HEK293T (cell line): ENCODE measurements at regions of chr1 and their contacts with region 1.

Region 1: DNA sequence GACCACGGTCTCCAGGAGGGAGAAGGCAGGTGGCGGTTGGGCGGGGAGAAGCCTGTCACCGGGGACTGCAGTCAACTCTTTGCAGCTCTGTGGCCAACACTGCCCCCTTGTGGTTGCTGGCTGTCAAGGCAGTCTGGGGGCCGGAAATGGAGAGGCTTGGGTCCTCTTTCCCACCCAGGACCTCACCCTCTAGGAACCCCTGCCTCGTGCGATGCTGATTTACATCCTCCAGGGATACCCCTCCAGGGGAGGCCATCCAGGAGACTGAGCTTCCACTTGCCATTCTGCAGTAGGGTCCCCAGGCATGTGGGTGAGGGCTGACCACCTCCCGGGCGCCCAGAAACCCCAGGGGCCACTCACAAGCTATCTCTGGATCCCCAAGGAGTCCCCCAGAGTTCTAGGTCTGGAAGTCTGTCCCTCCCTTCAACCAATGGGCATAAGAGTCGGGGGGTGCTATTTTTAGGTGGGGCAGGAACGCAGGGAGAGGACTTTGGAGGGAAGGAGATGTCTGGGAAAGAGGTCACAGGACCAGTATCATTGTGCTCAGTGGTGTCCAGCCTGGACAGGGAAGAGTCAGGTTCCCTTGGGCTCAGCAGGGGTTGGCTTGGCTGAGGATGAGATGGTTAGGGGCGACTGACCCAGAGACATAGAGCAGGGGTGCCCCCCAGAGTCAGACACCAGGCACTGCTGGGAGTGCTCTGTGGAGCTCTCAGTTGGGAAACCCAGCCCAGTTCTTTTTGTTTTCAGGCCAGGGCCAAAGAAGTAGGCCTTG is 7.1 kb upstream of the GPR61 start:
- DNase-seq: peak; percentile 95

Region 2: GRCh38 chr1:109493805-109494539 is 38.6 kb before region 1 on chr1 and contains the start of gene CYB561D1:
- CTCF ChIA-PET with region 1: interaction called, 115 read pairs
- POLR2A ChIA-PET with region 1: interaction called, 13 read pairs
- DNase-seq: peak; percentile 97

Region 3: DNA sequence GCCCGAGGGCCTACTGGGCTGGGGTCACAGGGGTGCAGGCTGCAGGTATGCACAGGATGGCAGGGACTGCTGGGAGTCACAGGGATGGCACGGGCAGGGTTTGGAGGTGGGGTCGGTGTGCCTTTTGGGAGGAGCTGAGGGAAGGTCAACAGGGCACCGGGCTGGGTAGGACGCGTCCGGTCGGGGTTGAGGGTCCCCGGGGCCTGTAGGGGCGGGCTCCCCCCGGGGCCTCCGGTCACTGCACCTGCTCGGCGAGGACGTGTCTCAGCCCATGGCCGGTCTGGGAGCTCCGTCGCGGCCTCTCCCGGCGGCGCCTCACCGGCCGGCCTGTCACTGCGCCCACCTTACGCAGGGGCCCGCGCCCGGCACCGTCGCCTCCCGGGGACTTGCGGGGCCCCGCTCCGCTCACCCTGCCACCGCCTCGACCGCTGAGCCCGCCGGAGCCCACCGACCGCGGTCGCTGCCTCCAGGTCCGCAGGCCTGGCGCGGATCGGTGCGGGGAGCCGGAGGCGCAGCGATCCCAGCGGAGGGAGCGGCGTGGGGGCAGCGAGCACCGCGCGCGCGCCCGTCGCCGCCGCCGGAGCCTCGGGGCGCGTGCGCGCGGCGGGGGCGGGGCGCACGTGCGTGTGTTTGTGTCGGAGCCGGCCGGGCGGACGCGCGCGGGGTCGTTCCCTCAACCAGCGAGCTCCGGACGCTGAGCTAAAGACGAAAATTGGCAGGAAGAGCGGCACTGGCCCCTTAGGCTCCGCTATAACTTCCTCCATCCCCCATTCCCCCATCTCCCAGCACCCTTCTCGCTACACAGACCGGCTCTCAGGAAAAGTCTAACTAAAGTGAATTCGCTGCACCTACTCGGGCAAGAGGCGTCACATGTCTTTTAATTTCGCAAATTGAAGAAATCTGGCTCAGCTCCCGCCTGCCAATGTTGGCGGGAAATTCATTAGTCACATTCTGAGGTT is 23.1 kb before region 1 on chr1 and contains the start of gene AMIGO1:
- CTCF ChIA-PET with region 1: interaction called, 37 read pairs
- POLR2A ChIA-PET with region 1: interaction called, 7 read pairs
- DNase-seq: peak; percentile 91

Region 4: DNA sequence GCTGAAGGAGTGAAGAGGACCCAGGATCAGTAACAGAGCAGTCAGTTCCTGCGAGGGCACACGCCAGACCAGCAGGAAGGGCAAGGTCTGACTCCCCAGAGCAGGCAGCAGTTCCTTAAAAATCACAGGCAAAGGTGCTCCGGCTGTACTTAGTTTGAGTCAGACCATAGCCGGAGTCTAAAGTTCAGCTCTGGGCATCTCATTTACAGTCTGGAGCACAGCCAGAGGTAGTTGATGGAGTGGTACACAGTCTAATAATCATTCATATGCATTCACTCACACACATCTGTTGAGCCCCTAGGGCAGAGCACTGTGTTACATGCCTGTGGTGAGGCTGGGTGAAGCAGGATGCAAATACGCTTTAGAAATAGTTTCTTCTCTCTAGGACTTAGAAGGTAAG is 15.7 kb before region 1 on chr1:
- CTCF ChIA-PET with region 1: interaction called, 26 read pairs
- POLR2A ChIA-PET with region 1: interaction called, 7 read pairs
- DNase-seq: no peak

Region 5: DNA sequence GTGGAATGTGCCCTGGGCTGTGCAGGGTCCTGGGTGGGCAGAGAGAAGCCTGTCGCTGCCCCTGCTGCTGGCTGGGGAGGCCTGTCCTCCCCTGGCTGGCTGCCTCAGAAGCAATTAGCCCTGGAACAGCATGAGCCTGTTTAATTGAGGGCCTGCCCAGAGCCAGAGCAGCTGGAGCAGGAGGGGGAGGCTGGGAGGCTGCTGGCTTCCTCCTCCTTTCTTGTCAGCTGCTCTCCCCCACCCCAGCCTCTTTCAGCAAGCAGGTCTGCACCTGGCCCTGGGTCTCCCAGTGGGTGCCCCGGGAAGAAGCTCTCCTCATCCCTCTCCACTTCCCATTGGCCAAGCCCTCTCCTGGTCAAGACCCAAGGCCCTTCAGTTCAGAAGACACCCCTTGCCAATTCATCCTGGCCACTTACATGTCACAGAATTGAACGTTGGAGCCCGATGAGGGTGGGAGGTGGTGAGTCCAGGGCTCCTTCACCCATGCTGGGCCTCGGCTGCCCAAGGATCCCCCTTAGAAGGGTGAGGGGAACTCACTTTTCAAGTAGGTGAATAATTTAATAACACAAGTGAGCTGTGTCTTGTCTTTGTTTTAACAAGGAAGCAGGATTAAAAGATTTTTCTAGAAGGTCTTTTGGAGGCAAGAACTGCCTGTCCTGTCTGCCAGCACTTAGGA is 100.3 kb after region 1 on chr1:
- CTCF ChIA-PET with region 1: no interaction called
- POLR2A ChIA-PET with region 1: no interaction called
- DNase-seq: no peak